ENCODE measurements at regions of chr5 and their contacts with region 1.

Region 1: GRCh38 chr5:50595199-50595598 is 71.2 kb upstream of the PARP8 start:
- DNase-seq: no peak
- ATAC-seq: no peak
- H3K4me3 ChIP-seq: no peak overlapping the region
- H3K4me3 Mint-ChIP-seq: no peak overlapping the region
- H3K27ac ChIP-seq: no peak overlapping the region
- H3K27ac Mint-ChIP-seq: peak overlapping the region in 2 of 9 donors; percentile 34
- H3K4me1 ChIP-seq: peaks cover 31 to 46% of the 10 kb centered on the region in 2 donors
- H3K4me1 Mint-ChIP-seq: peaks cover 23 to 54% (median 39%) of the 10 kb centered on the region in 7 donors
- H3K27me3 ChIP-seq: no peaks in the 10 kb centered on the region
- H3K27me3 Mint-ChIP-seq: no peaks in the 10 kb centered on the region

Region 2: DNA sequence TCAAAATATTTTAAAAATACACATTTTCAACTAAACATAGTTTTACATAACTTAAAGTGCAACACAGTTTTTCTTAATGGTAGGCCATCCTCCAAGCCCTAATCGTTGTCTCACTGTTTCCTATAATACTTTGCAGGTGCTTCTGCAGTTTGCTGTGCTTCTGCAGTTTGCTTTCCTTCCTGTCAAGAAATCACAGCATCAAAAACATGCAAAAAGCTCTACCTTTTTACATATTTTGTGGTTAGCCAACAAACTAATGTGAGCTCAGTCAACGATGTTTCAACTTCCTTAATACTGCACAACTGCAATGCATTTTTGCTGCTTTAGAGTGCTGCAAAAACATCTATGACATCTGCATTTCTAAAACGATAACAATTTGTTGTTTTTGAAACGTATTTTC is 179.3 kb before region 1 on chr5:
- CTCF ChIA-PET with region 1: no interaction called
- POLR2A ChIA-PET with region 1: no interaction called
- intact Hi-C with region 1: loop called in 1 of 2 experiments (anchors 5 kb)
- DNase-seq: peak in 7 of 9 donors; percentile 57 to 85 (median 74)
- ATAC-seq: peak; percentile 86
- H3K4me3 ChIP-seq: no peak overlapping the region
- H3K4me3 Mint-ChIP-seq: peak overlapping the region in 7 of 10 donors; percentile 42 to 69 (median 60)
- H3K27ac ChIP-seq: peak overlapping the region; percentile 65
- H3K27ac Mint-ChIP-seq: peak overlapping the region in 8 of 9 donors; percentile 68 to 96 (median 93)
- H3K4me1 ChIP-seq: peaks cover 37 to 40% of the 10 kb centered on the region in 2 donors
- H3K4me1 Mint-ChIP-seq: peaks cover 49 to 97% (median 90%) of the 10 kb centered on the region in 7 donors
- H3K27me3 ChIP-seq: no peaks in the 10 kb centered on the region
- H3K27me3 Mint-ChIP-seq: no peaks in the 10 kb centered on the region

Region 3: GRCh38 chr5:50547303-50547702 is 47.9 kb before region 1 on chr5:
- CTCF ChIA-PET with region 1: no interaction called
- POLR2A ChIA-PET with region 1: no interaction called
- intact Hi-C with region 1: no loop called
- DNase-seq: no peak
- ATAC-seq: no peak
- H3K4me3 ChIP-seq: no peak overlapping the region
- H3K4me3 Mint-ChIP-seq: no peak overlapping the region
- H3K27ac ChIP-seq: no peak overlapping the region
- H3K27ac Mint-ChIP-seq: peak overlapping the region in 5 of 9 donors; percentile 0 to 85 (median 27)
- H3K4me1 ChIP-seq: no peaks in the 10 kb centered on the region
- H3K4me1 Mint-ChIP-seq: peaks cover 2 to 25% (median 12%) of the 10 kb centered on the region in 7 donors
- H3K27me3 ChIP-seq: no peaks in the 10 kb centered on the region
- H3K27me3 Mint-ChIP-seq: no peaks in the 10 kb centered on the region

Region 4: GRCh38 chr5:50564079-50564478 is 31.1 kb before region 1 on chr5:
- CTCF ChIA-PET with region 1: no interaction called
- POLR2A ChIA-PET with region 1: no interaction called
- intact Hi-C with region 1: loop called in 1 of 2 experiments (anchors 5 kb)
- DNase-seq: peak in 7 of 9 donors; percentile 1 to 59 (median 18)
- ATAC-seq: peak; percentile 77
- H3K4me3 ChIP-seq: no peak overlapping the region
- H3K4me3 Mint-ChIP-seq: peak overlapping the region in 8 of 10 donors; percentile 26 to 71 (median 48)
- H3K27ac ChIP-seq: no peak overlapping the region
- H3K27ac Mint-ChIP-seq: peak overlapping the region in 4 of 9 donors; percentile 7 to 76 (median 47)
- H3K4me1 ChIP-seq: peaks cover 0 to 29% of the 10 kb centered on the region in 2 donors
- H3K4me1 Mint-ChIP-seq: peaks cover 6 to 53% (median 35%) of the 10 kb centered on the region in 7 donors
- H3K27me3 ChIP-seq: no peaks in the 10 kb centered on the region
- H3K27me3 Mint-ChIP-seq: peaks cover 0 to 3% (median 0%) of the 10 kb centered on the region in 5 donors

Region 5: GRCh38 chr5:50576686-50577256 is 18.4 kb before region 1 on chr5:
- CTCF ChIA-PET with region 1: interaction called, 3 read pairs
- POLR2A ChIA-PET with region 1: interaction called, 4 read pairs
- intact Hi-C with region 1: loop called in 1 of 2 experiments (anchors 2 kb)
- DNase-seq: no peak
- ATAC-seq: no peak
- H3K4me3 ChIP-seq: no peak overlapping the region
- H3K4me3 Mint-ChIP-seq: no peak overlapping the region
- H3K27ac ChIP-seq: no peak overlapping the region
- H3K27ac Mint-ChIP-seq: peak overlapping the region in 1 of 9 donors; percentile 78
- H3K4me1 ChIP-seq: peaks cover 0 to 20% of the 10 kb centered on the region in 2 donors
- H3K4me1 Mint-ChIP-seq: peaks cover 12 to 30% (median 19%) of the 10 kb centered on the region in 7 donors
- H3K27me3 ChIP-seq: no peaks in the 10 kb centered on the region
- H3K27me3 Mint-ChIP-seq: peaks cover 0 to 6% (median 0%) of the 10 kb centered on the region in 5 donors

Region 6: DNA sequence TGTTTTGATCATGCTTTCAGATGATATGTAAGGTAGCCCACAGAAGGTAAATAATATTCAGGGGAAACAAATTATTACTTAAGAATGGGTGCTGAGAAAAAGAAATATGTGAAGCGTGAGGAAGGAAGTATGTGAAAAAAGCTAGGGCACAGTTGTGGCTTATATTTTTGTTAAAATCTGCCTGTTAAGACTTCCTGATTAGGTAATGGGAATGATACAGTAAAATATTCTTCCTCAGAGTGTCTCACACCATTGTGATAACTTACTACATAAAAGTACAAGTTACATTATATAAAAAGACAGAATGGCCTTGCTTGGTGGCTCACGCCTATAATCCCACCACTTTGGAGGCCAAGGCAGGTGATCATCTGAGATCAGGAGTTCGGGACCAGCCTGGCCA is 52.5 kb after region 1 on chr5:
- CTCF ChIA-PET with region 1: no interaction called
- POLR2A ChIA-PET with region 1: no interaction called
- intact Hi-C with region 1: no loop called
- DNase-seq: no peak
- ATAC-seq: no peak
- H3K4me3 ChIP-seq: no peak overlapping the region
- H3K4me3 Mint-ChIP-seq: no peak overlapping the region
- H3K27ac ChIP-seq: no peak overlapping the region
- H3K27ac Mint-ChIP-seq: peak overlapping the region in 7 of 9 donors; percentile 22 to 56 (median 26)
- H3K4me1 ChIP-seq: no peaks in the 10 kb centered on the region
- H3K4me1 Mint-ChIP-seq: peaks cover 6 to 43% (median 27%) of the 10 kb centered on the region in 7 donors
- H3K27me3 ChIP-seq: no peaks in the 10 kb centered on the region
- H3K27me3 Mint-ChIP-seq: no peaks in the 10 kb centered on the region

Region 7: GRCh38 chr5:50751064-50751657 is 156.0 kb after region 1 on chr5:
- CTCF ChIA-PET with region 1: no interaction called
- POLR2A ChIA-PET with region 1: no interaction called
- intact Hi-C with region 1: loop called (anchors 2 to 5 kb)
- DNase-seq: peak in 7 of 9 donors; percentile 58 to 79 (median 69)
- ATAC-seq: peak; percentile 99
- H3K4me3 ChIP-seq: no peak overlapping the region
- H3K4me3 Mint-ChIP-seq: peak overlapping the region in 9 of 10 donors; percentile 37 to 69 (median 61)
- H3K27ac ChIP-seq: no peak overlapping the region
- H3K27ac Mint-ChIP-seq: peak overlapping the region; percentile 68 to 92 (median 89)
- H3K4me1 ChIP-seq: peaks cover 27 to 32% of the 10 kb centered on the region in 2 donors
- H3K4me1 Mint-ChIP-seq: peaks cover 36 to 75% (median 61%) of the 10 kb centered on the region in 7 donors
- H3K27me3 ChIP-seq: no peaks in the 10 kb centered on the region
- H3K27me3 Mint-ChIP-seq: no peaks in the 10 kb centered on the region

Region 8: GRCh38 chr5:51053361-51053760 is 458.2 kb after region 1 on chr5:
- CTCF ChIA-PET with region 1: no interaction called
- POLR2A ChIA-PET with region 1: no interaction called
- intact Hi-C with region 1: no loop called
- DNase-seq: no peak
- ATAC-seq: no peak
- H3K4me3 ChIP-seq: no peak overlapping the region
- H3K4me3 Mint-ChIP-seq: no peak overlapping the region
- H3K27ac ChIP-seq: no peak overlapping the region
- H3K27ac Mint-ChIP-seq: no peak overlapping the region
- H3K4me1 ChIP-seq: no peaks in the 10 kb centered on the region
- H3K4me1 Mint-ChIP-seq: no peaks in the 10 kb centered on the region
- H3K27me3 ChIP-seq: no peaks in the 10 kb centered on the region
- H3K27me3 Mint-ChIP-seq: peaks cover 0 to 6% (median 0%) of the 10 kb centered on the region in 5 donors

Measured in naive thymus-derived CD4-positive, alpha-beta T cell (primary cell).